Left ventricle myocardium inferior (tissue), 1 donor: ENCODE measurements at regions of chr1 and their contacts with region 1.

Region 1: GRCh38 chr1:100582943-100583342 is 45.0 kb downstream of the GPR88 start:
- DNase-seq: no peak
- H3K4me3 ChIP-seq: no peak overlapping the region
- H3K27ac ChIP-seq: no peak overlapping the region
- H3K4me1 ChIP-seq: peaks cover 24% of the 10 kb centered on the region
- H3K27me3 ChIP-seq: no peaks in the 10 kb centered on the region
- CTCF ChIP-seq: no peak

Region 2: DNA sequence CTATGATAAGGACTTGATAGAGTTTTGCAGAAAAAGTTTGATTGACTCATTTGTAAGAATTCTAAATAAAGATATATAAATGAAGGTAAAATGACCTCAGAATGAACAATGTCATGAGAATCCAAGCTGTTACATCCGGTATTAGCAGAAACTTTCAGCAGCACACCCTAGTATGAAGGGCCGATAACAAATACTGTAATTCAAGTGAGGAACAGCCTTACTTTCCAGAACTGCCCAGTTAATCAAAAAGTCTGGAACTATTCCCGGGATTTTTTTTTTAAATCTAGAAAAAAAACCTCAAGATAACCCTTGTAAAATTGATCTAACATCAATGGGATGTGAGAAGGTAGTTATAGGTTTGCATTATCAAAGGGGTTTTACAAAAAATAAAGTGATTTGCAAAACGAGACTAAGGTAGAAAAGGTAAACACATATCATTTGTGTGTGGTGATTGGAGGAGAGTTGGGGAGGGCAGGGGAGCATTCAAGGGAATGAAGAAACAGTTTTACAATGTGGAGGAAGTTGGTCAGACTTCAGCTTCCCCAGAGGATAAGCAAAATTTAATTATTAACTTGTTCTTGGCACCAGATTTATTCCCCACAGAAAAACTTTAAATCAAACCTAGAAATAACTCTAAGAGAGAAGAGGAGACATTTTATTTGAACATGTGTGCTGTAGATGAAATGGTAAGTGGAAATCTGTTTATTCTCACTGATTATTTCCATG is 60.7 kb after region 1 on chr1:
- intact Hi-C with region 1: loop called (anchors 2 kb)
- DNase-seq: no peak
- H3K4me3 ChIP-seq: no peak overlapping the region
- H3K27ac ChIP-seq: peak overlapping the region; percentile 35
- H3K4me1 ChIP-seq: peaks cover 10% of the 10 kb centered on the region
- H3K27me3 ChIP-seq: no peaks in the 10 kb centered on the region
- CTCF ChIP-seq: no peak